A549 (cell line): ENCODE measurements at regions of chr9 and their contacts with region 1.

Region 1: GRCh38 chr9:76810377-76810957 is 46.2 kb downstream of the PCA3 start:
- DNase-seq: peak; percentile 8 to 73
- ATAC-seq: peak; percentile 95 to 96
- H3K4me3 ChIP-seq: no peak overlapping the region
- H3K27ac ChIP-seq: no peak overlapping the region
- H3K4me1 ChIP-seq: no peaks in the 10 kb centered on the region
- CTCF ChIP-seq: peak; percentile 98
- EP300 ChIP-seq: no peak
- POLR2A ChIP-seq: no peak
- RAD21 ChIP-seq: peak; percentile 97 to 99

Region 2: DNA sequence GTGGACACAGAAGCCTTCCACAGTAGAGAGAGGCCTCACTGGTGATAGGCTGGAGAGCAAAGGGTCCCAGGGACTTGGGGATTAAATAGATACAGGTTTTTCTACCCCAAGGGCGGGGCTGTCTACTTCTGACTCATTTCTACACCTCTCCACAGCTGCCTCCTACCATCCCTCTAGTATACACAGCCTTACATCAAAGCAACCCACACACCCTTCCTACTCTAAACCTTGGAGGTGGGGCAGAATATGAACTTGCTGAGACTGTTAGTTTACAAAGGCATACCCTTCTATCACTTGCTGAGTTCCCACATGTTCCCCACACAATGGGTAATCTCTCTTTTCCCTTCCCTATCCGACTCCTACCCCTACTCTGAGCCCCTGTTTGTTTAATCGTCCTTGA is 66.1 kb before region 1 on chr9:
- CTCF ChIA-PET with region 1: no interaction called
- POLR2A ChIA-PET with region 1: no interaction called
- DNase-seq: no peak
- ATAC-seq: no peak
- H3K4me3 ChIP-seq: no peak overlapping the region
- H3K27ac ChIP-seq: no peak overlapping the region
- H3K4me1 ChIP-seq: no peaks in the 10 kb centered on the region
- CTCF ChIP-seq: no peak
- EP300 ChIP-seq: no peak
- POLR2A ChIP-seq: no peak
- RAD21 ChIP-seq: no peak

Region 3: DNA sequence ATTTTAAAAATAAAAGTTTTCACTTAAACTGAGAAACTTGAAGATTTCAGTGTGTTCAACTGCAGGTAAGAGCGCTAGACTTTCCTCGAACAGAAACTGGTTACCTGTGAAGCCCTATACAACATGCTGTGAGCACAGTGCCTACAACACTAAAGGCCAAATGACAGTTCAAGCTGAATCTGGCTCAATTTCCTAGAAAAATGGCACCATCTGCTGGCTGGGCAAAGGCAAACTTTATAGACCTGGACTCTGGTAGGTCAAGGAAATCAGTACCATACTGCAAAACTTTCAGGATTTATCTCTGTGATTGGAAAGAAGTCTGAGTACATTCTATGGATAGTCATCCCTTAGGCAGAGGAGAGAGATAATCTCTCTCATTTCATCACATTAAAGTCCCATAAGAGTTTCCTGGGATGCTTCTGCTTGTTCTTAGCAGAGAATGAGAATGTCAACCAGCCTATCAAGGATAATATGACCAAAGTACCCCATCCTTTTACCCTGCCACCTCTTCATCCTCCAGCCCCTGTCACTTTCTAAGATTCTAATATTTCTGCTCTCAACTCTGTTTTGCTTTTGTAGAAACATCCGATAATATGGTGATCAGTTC is 177.2 kb after region 1 on chr9:
- CTCF ChIA-PET with region 1: interaction called, 309 read pairs
- POLR2A ChIA-PET with region 1: no interaction called
- DNase-seq: peak; percentile 38 to 60
- ATAC-seq: peak; percentile 89 to 95; a peak in 5 of 6 replicates
- H3K4me3 ChIP-seq: no peak overlapping the region
- H3K27ac ChIP-seq: no peak overlapping the region
- H3K4me1 ChIP-seq: no peaks in the 10 kb centered on the region
- CTCF ChIP-seq: peak; percentile 75
- EP300 ChIP-seq: no peak
- POLR2A ChIP-seq: no peak
- RAD21 ChIP-seq: peak; percentile 88 to 92

Region 4: GRCh38 chr9:77005216-77005615 is 194.7 kb after region 1 on chr9:
- CTCF ChIA-PET with region 1: interaction called, 309 read pairs
- POLR2A ChIA-PET with region 1: no interaction called
- DNase-seq: no peak
- ATAC-seq: no peak
- H3K4me3 ChIP-seq: no peak overlapping the region
- H3K27ac ChIP-seq: no peak overlapping the region
- H3K4me1 ChIP-seq: no peaks in the 10 kb centered on the region
- CTCF ChIP-seq: no peak
- EP300 ChIP-seq: no peak
- POLR2A ChIP-seq: no peak
- RAD21 ChIP-seq: no peak

Region 5: GRCh38 chr9:77011973-77012821 is 201.7 kb after region 1 on chr9:
- CTCF ChIA-PET with region 1: interaction called, 22 read pairs
- POLR2A ChIA-PET with region 1: no interaction called
- DNase-seq: peak in 1 of 2 experiments; percentile 61
- ATAC-seq: peak; percentile 70 to 89
- H3K4me3 ChIP-seq: peak overlapping the region; percentile 25; the same call in 2 of the 3 replicates
- H3K27ac ChIP-seq: no peak overlapping the region
- H3K4me1 ChIP-seq: peaks cover 22% of the 10 kb centered on the region; the same call in 2 of the 3 replicates
- CTCF ChIP-seq: peak; percentile 77
- EP300 ChIP-seq: no peak
- POLR2A ChIP-seq: no peak
- RAD21 ChIP-seq: peak; percentile 57 to 59; a peak in 4 of 5 replicates

Region 6: DNA sequence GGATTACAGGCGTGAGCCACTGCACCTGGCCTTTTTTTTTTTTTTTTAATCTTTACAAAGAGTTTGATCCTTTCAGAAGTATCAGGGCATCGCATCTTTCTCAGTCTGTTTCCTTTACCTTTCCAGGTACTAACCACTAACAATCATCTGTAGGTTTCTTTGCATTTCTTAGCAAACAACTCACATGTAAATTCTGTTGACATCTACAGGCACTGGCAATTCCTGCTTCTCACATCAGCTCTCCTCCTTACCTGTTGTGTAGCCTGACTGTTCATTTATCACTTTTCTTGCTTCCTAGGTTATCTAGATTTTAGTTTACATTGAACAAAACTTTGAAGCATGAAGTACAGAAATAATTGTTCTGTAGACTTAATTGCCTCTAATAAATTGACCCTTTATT is 339.4 kb after region 1 on chr9:
- CTCF ChIA-PET with region 1: interaction called, 14 read pairs
- POLR2A ChIA-PET with region 1: interaction called, 4 read pairs
- DNase-seq: no peak
- ATAC-seq: no peak
- H3K4me3 ChIP-seq: no peak overlapping the region
- H3K27ac ChIP-seq: no peak overlapping the region
- H3K4me1 ChIP-seq: no peaks in the 10 kb centered on the region
- CTCF ChIP-seq: no peak
- EP300 ChIP-seq: no peak
- POLR2A ChIP-seq: no peak
- RAD21 ChIP-seq: no peak